PC-3 (cell line): ENCODE measurements at regions of chr2 and their contacts with region 1.

Region 1: DNA sequence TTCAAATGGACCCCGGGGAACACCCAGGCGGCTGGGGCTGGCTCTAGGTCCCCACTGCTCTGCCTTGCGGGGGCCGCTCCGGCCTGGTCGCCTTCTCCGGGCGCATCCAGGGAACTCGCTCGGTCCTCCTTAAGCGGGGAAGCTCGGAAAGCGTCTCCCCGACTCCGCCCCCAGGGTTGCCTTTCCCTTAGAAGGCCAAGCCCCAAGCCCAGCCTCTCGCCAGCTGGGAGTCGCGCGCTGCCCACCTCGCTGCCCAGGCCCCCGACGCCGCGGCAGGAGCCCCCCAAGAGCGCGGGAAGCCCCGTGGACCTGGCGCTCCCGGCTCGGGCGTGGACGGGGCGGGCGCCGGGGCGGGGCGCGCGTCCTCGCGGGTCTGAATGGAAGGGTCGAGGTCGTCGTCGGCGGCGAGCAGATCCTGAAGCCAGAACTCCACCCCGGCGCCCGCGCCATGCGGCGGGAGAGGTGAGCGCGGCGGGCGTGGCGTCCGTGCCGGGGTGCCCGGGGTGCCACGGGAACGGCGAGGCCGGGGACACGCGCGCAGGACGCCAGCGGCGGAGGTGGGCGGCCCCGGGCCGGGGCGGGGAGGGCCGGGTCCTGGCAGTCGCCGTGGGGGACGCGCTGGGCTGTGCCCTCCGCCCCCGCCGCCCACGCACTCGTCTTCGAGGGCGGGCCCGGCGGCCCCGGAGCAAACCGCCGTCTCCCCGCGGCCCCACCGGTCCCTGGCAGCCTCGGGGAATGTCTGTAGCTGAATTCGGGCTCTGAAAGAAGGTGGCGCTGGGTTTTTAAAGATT is at the start of gene BOK:
- DNase-seq: peak; percentile 72
- ATAC-seq: peak; percentile 55
- H3K4me3 ChIP-seq: peak within 1 kb of the TSS; percentile 91
- H3K27ac ChIP-seq: peak within 1 kb of the TSS; percentile 42
- H3K4me1 ChIP-seq: peaks cover 51% of the 10 kb centered on the region
- H3K27me3 ChIP-seq: no peaks in the 10 kb centered on the region
- CTCF ChIP-seq: no peak
- total RNA-seq, gene BOK: 30.2 and 39.3 TPM in 2 replicates

Region 2: DNA sequence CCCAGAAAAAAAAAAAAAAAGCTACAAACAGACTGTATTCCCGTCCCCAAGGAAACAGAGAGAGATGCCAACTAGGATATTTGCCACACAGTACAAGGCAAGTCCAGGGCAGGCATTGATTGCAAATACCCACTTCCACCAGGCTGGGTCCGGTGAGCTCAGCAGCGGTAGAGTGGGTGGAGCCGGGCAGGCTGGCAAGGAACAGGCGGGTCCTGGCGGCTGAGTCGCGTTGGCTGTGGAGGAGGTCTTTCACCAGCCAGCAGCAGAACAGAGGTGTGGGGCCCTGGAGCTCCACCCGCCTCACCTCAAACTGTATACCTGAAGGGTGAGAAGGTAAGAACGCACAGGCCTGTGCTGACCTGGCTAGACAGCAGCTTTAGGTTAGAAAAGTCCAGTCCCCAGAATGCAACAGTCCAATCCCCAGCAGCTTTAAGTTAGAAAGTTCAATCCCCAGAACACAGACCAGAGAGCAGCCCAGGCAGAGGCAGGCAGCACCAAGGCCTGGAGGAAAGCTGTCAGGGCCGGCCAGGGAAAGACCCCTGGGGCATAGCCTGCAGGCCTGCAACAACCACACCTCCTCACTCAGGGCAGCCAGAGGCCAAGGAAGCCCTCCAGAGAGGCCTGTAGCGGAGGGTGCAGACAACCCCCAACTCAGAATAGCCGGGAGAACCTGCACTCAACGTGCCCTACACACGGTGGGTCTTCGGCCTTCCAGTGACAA is 434.8 kb before region 1 on chr2:
- CTCF ChIA-PET with region 1: no interaction called
- POLR2A ChIA-PET with region 1: no interaction called
- intact Hi-C with region 1: no loop called
- DNase-seq: no peak
- ATAC-seq: peak; percentile 31; the same call in 1 of the 2 replicates
- H3K4me3 ChIP-seq: no peak overlapping the region
- H3K27ac ChIP-seq: no peak overlapping the region
- H3K4me1 ChIP-seq: no peaks in the 10 kb centered on the region
- H3K27me3 ChIP-seq: no peaks in the 10 kb centered on the region
- CTCF ChIP-seq: no peak

Region 3: GRCh38 chr2:241454837-241455485 is 103.8 kb before region 1 on chr2:
- CTCF ChIA-PET with region 1: no interaction called
- POLR2A ChIA-PET with region 1: no interaction called
- intact Hi-C with region 1: no loop called
- DNase-seq: no peak
- ATAC-seq: no peak
- H3K4me3 ChIP-seq: no peak overlapping the region
- H3K27ac ChIP-seq: no peak overlapping the region
- H3K4me1 ChIP-seq: no peaks in the 10 kb centered on the region
- H3K27me3 ChIP-seq: no peaks in the 10 kb centered on the region
- CTCF ChIP-seq: no peak

Region 4: DNA sequence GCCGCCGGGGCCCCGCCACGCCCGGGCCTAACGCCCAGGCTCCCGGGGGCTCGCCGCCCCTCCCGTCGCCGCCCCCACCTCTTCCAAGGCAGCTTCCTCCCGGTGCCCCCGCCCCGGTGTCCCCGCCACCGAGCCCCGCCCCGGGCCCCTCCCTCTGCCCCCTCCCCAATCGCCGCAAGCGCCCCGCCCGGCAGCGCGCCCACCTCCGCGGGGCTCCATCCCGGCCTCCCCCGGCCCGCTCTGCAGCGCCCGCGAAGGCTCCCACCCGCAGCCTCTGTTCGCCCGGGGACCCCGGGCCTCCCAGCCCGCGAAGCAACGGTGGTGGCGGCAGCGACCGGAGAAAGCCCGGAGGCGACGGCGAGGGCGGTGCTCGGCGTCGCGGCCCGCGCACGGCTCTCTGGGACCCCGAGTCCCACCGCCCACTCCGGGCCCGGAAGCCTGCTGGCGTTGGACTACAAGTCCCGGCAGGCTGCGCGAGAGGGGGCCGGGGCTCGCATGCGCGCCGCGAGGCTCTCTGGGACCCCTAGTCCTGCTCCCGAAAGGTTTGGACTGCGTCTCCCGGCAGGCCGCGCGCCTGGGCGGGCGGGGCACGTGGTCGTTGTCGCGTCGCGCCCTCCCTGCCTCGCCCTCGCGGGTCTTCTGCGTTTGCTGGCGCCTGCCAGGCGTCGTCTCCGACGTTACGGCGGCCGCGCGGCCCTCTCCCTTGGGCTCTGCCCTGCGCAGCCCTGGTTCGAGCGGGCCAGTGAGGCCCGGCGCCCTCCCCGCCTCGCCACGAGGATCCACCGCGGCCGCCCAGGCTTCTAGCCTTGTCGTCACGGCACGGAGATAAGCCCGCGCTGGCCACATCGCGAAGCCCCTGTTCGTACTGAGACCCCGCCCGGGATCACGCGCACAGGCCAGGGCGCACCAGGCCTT is 50.2 kb before region 1 on chr2 and contains the start of gene STK25:
- CTCF ChIA-PET with region 1: no interaction called
- POLR2A ChIA-PET with region 1: no interaction called
- intact Hi-C with region 1: loop called (anchors 5 kb)
- DNase-seq: peak; percentile 97
- ATAC-seq: peak; percentile 94
- H3K4me3 ChIP-seq: peak within 1 kb of the TSS; percentile 90
- H3K27ac ChIP-seq: peak within 1 kb of the TSS; percentile 6; the same call in 1 of the 2 replicates
- H3K4me1 ChIP-seq: peaks cover 17% of the 10 kb centered on the region
- H3K27me3 ChIP-seq: no peaks in the 10 kb centered on the region
- CTCF ChIP-seq: no peak
- total RNA-seq, gene STK25: 198 and 245 TPM in 2 replicates

Region 5: DNA sequence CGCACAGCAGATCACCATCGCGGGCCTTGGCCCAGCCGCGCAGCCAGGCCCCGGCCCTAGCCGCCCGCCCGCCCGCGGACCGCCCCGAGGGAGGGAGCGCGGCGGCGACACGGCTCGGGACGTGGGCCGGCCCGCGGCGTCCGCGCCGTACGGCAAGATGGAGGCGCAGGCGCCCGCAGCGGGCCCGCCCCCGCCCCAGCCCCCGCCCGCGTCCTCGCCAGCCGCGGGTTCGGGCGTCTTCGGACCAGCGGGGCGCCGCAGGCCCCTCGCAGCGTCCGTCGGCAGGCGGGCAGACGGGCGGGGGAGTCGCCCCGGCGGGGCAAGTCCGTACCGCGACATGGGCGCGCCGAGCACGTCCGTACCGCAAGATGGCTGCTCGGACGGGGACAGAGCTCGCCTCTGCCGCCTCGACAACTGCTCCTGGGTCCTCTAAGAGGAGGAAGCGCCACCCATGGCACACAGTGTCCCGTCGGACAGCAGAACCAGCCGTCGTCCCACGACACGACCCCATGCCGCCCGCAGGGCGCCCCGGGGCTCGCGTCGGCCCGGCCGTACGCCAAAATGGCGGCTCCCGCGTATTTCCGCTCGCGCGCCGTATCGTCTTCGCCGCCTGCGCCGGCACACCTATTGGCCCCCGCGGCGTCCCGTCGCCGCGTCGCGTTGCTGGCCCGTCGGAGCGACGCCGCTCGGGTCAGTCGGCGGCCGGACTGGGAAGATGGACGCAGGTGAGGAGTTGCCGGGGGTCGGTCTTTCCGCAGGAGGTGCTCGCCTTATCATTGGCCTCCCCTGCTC is 78.5 kb after region 1 on chr2 and contains the starts of genes ATG4B and THAP4:
- CTCF ChIA-PET with region 1: no interaction called
- POLR2A ChIA-PET with region 1: no interaction called
- intact Hi-C with region 1: loop called (anchors 5 kb)
- DNase-seq: peak; percentile 86
- ATAC-seq: peak; percentile 76
- H3K4me3 ChIP-seq: peak within 1 kb of the TSS; percentile 100
- H3K27ac ChIP-seq: peak within 1 kb of the TSS; percentile 83
- H3K4me1 ChIP-seq: peaks cover 17% of the 10 kb centered on the region
- H3K27me3 ChIP-seq: no peaks in the 10 kb centered on the region
- CTCF ChIP-seq: no peak
- total RNA-seq, gene ATG4B: 83.0 and 88.6 TPM in 2 replicates
- total RNA-seq, gene THAP4: 75.1 and 102 TPM in 2 replicates